Dendritic cell treated with granulocyte-macrophage colony-stimulating factor and Interleukin-4, amounts not matched to agents 40 ng/mL and 50 ng/mL, for 4 days (primary cell): ENCODE measurements at regions of chrX and their contacts with region 1.

Region 1: DNA sequence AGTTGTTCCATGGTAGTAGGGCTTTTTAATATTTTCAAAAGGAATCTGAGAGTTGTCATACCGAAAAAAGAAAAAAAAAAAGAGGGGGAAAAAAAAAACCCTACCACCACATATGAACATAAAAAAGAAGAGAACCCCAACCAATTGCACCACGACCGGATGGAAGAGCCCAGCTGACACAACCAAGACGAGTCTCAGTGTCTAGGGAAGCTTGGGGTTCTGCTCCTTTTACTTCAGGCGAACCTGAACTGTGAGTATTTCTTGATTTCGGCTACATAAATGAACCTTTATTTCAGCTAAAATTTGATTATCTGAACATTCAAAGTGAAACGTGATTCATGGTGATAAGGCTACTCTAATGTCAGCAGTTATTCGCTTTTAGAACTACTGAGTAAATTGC is at the start of gene GPR34:
- H3K4me3 Mint-ChIP-seq: peak within 1 kb of the TSS; percentile 58
- H3K27ac Mint-ChIP-seq: peak within 1 kb of the TSS; percentile 73
- H3K4me1 Mint-ChIP-seq: peaks cover 23% of the 10 kb centered on the region
- H3K27me3 Mint-ChIP-seq: no peaks in the 10 kb centered on the region

Region 2: GRCh38 chrX:41512394-41512793 is 176.4 kb before region 1 on chrX:
- intact Hi-C with region 1: no loop called
- H3K4me3 Mint-ChIP-seq: no peak overlapping the region
- H3K27ac Mint-ChIP-seq: no peak overlapping the region
- H3K4me1 Mint-ChIP-seq: no peaks in the 10 kb centered on the region
- H3K27me3 Mint-ChIP-seq: no peaks in the 10 kb centered on the region

Region 3: GRCh38 chrX:41734530-41734929 is 45.7 kb after region 1 on chrX:
- intact Hi-C with region 1: loop called (anchors 10 kb)
- H3K4me3 Mint-ChIP-seq: peak overlapping the region; percentile 32
- H3K27ac Mint-ChIP-seq: peak overlapping the region; percentile 62
- H3K4me1 Mint-ChIP-seq: peaks cover 27% of the 10 kb centered on the region
- H3K27me3 Mint-ChIP-seq: no peaks in the 10 kb centered on the region